ENCODE measurements at regions of chr16 and their contacts with region 1.

Region 1: GRCh38 chr16:27698266-27698665 is 148.3 kb downstream of the KATNIP start:
- DNase-seq: peak; percentile 70 to 95
- H3K4me3 ChIP-seq: no peak overlapping the region
- H3K27ac ChIP-seq: no peak overlapping the region
- H3K4me1 ChIP-seq: peaks cover 0 to 11% (median 2%) of the 10 kb centered on the region in 4 experiments; a peak in 4 of 7 replicates
- H3K27me3 ChIP-seq: no peaks in the 10 kb centered on the region
- CTCF ChIP-seq: peak; percentile 97 to 98 (median 97)
- EP300 ChIP-seq: no peak
- POLR2A ChIP-seq: no peak
- RAD21 ChIP-seq: peak; percentile 68 to 81

Region 2: GRCh38 chr16:27712251-27712711 is 14.0 kb after region 1 on chr16:
- CTCF ChIA-PET with region 1: interaction called, 14 read pairs
- POLR2A ChIA-PET with region 1: no interaction called
- DNase-seq: peak in 1 of 2 experiments; percentile 19
- H3K4me3 ChIP-seq: no peak overlapping the region
- H3K27ac ChIP-seq: no peak overlapping the region
- H3K4me1 ChIP-seq: no peaks in the 10 kb centered on the region; a peak in 2 of 7 replicates
- H3K27me3 ChIP-seq: no peaks in the 10 kb centered on the region
- CTCF ChIP-seq: no peak
- EP300 ChIP-seq: no peak
- POLR2A ChIP-seq: no peak
- RAD21 ChIP-seq: no peak

Region 3: DNA sequence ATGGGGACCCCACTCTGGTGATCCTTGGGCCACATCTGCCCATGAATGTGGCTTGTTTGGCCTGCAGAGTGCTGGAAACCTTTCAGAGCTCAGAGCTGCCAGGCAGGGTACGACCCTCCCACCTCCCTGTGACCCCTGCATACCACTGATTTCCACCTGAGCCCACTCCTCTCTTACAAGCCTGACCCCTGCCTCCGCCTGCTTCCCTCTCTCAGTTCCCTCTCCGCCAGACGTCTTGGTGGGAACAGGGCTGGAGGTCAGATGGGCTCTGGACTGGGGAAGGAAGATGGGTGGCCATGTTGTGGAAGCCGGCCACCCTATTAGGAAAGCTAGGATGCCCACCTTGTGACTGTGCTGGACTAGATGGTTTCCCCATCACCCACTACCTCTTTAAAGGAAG is 36.8 kb after region 1 on chr16:
- CTCF ChIA-PET with region 1: interaction called, 14 read pairs
- POLR2A ChIA-PET with region 1: no interaction called
- DNase-seq: no peak
- H3K4me3 ChIP-seq: no peak overlapping the region
- H3K27ac ChIP-seq: no peak overlapping the region
- H3K4me1 ChIP-seq: no peaks in the 10 kb centered on the region
- H3K27me3 ChIP-seq: no peaks in the 10 kb centered on the region
- CTCF ChIP-seq: no peak
- EP300 ChIP-seq: no peak
- POLR2A ChIP-seq: no peak
- RAD21 ChIP-seq: no peak

Region 4: GRCh38 chr16:27748868-27749546 is 50.7 kb after region 1 on chr16:
- CTCF ChIA-PET with region 1: interaction called, 16 read pairs
- POLR2A ChIA-PET with region 1: no interaction called
- DNase-seq: peak in 1 of 2 experiments; percentile 31
- H3K4me3 ChIP-seq: no peak overlapping the region
- H3K27ac ChIP-seq: no peak overlapping the region
- H3K4me1 ChIP-seq: peaks cover 0 to 5% (median 2%) of the 10 kb centered on the region in 4 experiments; a peak in 2 of 7 replicates
- H3K27me3 ChIP-seq: no peaks in the 10 kb centered on the region
- CTCF ChIP-seq: peak; percentile 54 to 70 (median 62)
- EP300 ChIP-seq: no peak
- POLR2A ChIP-seq: no peak
- RAD21 ChIP-seq: peak; percentile 42 to 43; a peak in 3 of 4 replicates

Region 5: DNA sequence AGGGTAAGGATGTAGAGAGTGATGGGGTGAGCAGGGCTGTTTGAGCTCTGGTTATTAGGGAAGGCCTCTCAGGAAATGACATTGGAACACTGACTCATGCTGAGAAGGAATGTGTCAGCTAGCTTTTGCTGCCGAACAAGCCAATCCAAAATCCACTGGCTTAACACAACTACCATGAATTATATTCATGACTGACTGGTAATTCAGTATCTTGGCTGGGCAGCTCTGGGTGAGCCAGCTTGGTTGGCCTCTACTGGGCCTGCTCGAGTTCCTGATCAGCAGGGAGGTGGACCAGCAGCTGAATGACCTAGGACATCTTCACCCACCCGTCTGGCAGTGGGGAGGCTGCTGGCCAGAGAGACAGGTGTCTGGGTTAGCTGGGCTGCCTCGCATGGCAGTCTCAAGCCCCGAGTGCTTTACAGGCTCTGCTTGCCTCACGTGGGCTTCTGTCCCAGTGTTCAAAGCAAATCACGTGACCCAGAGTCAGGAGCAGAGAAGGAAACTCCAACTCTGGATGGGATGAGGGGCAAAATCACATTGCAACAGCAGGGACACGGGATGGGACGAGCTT is 61.1 kb after region 1 on chr16:
- CTCF ChIA-PET with region 1: interaction called, 14 read pairs
- POLR2A ChIA-PET with region 1: no interaction called
- DNase-seq: no peak
- H3K4me3 ChIP-seq: no peak overlapping the region
- H3K27ac ChIP-seq: no peak overlapping the region
- H3K4me1 ChIP-seq: peaks cover 0 to 3% (median 1%) of the 10 kb centered on the region in 4 experiments; a peak in 2 of 7 replicates
- H3K27me3 ChIP-seq: no peaks in the 10 kb centered on the region
- CTCF ChIP-seq: no peak
- EP300 ChIP-seq: no peak
- POLR2A ChIP-seq: no peak
- RAD21 ChIP-seq: no peak

Measured in H1 (cell line).